ENCODE measurements at regions of chr17 and their contacts with region 1.

Region 1: DNA sequence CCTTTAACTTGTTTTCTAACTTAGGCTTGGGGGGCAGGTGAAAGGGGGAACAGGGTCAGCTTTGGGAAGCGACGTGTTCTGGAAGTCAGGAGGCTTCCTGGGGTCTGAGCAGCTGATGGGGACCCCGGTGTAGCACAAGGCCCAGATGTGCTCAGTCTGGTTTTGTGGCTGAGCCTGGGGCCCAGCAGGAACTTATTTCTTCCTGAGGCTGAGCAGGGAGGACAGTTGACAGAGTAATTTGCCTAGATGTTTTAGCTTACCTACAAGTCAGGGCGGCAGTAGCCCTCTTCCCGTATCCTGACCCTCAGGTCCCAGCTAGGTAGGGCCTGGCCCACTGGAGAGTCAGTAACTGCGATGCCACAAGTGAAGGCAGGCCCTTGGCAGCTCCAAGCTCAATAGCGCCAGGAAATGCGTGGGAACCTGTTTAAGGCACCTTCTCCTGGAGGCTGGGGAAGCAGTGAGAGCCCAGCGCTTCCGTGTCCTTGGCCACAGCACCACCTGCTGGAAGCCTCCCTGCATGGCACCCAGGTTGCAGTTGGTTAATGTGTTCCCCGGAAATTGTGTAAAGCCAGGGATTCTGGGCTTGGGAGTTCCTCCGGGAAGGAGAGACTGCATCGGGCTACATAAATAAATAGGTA is 5.2 kb downstream of the CCR7 start:
- DNase-seq: peak; percentile 90
- ATAC-seq: no peak
- H3K4me3 Mint-ChIP-seq: peak overlapping the region; percentile 94
- H3K27ac Mint-ChIP-seq: peak overlapping the region; percentile 98
- H3K4me1 Mint-ChIP-seq: peaks cover 60% of the 10 kb centered on the region
- H3K27me3 Mint-ChIP-seq: no peaks in the 10 kb centered on the region

Region 2: DNA sequence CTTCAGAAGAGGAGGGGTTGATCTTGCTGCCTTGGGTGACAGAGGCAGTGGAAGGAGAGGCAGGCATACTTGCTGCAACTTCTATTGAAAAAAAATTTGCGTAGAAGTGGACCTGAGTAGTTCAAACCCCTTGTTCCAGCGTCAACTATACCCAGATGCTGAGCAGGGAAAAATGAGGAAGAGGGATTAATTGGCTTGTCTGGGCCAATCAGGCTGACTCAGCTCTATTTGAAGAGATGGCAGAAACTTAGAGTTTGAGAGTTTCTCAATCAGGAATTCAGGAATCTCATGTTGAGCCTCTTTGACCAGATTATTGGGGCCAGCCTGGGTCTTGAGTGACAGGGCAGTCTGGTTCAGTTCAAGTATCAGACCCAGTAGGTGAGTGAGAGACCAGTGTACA is 402.1 kb before region 1 on chr17:
- CTCF ChIA-PET with region 1: no interaction called
- POLR2A ChIA-PET with region 1: interaction called, 6 read pairs
- intact Hi-C with region 1: loop called in 1 of 2 experiments (anchors 1 kb)
- DNase-seq: no peak
- ATAC-seq: no peak
- H3K4me3 Mint-ChIP-seq: no peak overlapping the region
- H3K27ac Mint-ChIP-seq: peak overlapping the region; percentile 24
- H3K4me1 Mint-ChIP-seq: peaks cover 35% of the 10 kb centered on the region
- H3K27me3 Mint-ChIP-seq: no peaks in the 10 kb centered on the region

Region 3: DNA sequence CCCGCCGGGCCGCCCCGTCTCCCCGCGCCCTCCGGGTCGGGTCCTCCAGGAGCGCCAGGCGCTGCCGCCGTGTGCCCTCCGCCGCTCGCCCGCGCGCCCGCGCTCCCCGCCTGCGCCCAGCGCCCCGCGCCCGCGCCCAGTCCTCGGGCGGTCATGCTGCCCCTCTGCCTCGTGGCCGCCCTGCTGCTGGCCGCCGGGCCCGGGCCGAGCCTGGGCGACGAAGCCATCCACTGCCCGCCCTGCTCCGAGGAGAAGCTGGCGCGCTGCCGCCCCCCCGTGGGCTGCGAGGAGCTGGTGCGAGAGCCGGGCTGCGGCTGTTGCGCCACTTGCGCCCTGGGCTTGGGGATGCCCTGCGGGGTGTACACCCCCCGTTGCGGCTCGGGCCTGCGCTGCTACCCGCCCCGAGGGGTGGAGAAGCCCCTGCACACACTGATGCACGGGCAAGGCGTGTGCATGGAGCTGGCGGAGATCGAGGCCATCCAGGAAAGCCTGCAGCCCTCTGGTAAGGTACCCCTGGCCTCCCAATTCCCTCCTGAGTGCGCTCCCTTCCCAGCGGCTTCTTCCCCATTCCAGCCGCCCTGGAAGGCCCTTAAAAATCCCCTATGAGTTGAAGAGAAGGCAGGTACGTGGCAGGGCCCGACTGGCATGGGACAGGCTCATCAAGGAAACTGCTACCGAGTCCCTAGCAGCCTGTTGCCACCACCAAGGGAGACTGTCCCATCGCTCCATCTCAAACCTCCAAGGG is 116.3 kb before region 1 on chr17:
- CTCF ChIA-PET with region 1: interaction called, 4 read pairs
- POLR2A ChIA-PET with region 1: interaction called, 3 read pairs
- intact Hi-C with region 1: loop called in 1 of 2 experiments (anchors 1 kb)
- DNase-seq: peak; percentile 83
- ATAC-seq: peak; percentile 68
- H3K4me3 Mint-ChIP-seq: peak overlapping the region; percentile 70
- H3K27ac Mint-ChIP-seq: peak overlapping the region; percentile 88
- H3K4me1 Mint-ChIP-seq: peaks cover 45% of the 10 kb centered on the region
- H3K27me3 Mint-ChIP-seq: peaks cover 5% of the 10 kb centered on the region

Region 4: GRCh38 chr17:40542558-40543411 is 17.3 kb before region 1 on chr17:
- CTCF ChIA-PET with region 1: interaction called, 403 read pairs
- POLR2A ChIA-PET with region 1: interaction called, 179 read pairs
- intact Hi-C with region 1: loop called (anchors 1 kb)
- DNase-seq: peak; percentile 76
- ATAC-seq: peak; percentile 52
- H3K4me3 Mint-ChIP-seq: peak overlapping the region; percentile 63
- H3K27ac Mint-ChIP-seq: peak overlapping the region; percentile 98
- H3K4me1 Mint-ChIP-seq: peaks cover 88% of the 10 kb centered on the region
- H3K27me3 Mint-ChIP-seq: no peaks in the 10 kb centered on the region

Region 5: DNA sequence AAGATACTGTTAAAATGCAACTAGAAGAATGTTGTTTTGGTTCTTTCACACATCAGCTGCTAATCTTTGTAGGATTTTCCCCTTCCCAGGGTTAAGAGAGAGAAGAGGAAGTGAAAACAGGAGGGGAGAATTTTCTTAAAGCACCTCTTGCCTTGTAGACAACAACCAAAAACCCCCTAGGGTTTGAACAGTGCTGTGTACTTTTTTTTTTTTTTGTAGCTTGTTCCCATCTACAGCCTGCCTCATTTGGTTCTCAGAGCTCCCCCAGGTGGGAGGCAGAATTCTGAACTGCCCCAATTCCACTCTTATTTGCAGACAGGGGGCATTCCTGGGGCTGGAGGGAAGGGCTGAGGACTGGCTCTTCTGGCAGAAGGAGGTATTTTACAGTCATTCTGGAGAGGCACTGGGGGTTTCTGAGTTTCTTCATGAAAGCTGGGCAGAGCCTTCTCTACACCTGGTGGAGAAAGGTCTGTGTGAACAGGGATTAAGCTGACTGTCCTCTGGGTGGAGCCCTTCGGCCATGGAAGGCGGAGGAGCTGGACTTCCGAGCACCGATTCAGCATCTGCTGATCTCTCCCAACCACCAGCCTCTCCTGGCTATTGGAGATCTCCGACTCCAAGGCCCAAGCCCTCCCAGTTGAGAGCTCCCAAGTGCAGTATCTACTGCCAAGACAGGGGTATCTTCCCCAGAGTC is 55.4 kb after region 1 on chr17:
- CTCF ChIA-PET with region 1: interaction called, 149 read pairs
- POLR2A ChIA-PET with region 1: interaction called, 170 read pairs
- intact Hi-C with region 1: loop called (anchors 1 kb)
- DNase-seq: peak; percentile 64
- ATAC-seq: peak; percentile 35
- H3K4me3 Mint-ChIP-seq: peak overlapping the region; percentile 54
- H3K27ac Mint-ChIP-seq: peak overlapping the region; percentile 91
- H3K4me1 Mint-ChIP-seq: peaks cover 77% of the 10 kb centered on the region
- H3K27me3 Mint-ChIP-seq: no peaks in the 10 kb centered on the region

Region 6: GRCh38 chr17:40726919-40727318 is 166.8 kb after region 1 on chr17:
- CTCF ChIA-PET with region 1: no interaction called
- POLR2A ChIA-PET with region 1: no interaction called
- intact Hi-C with region 1: loop called in 1 of 2 experiments (anchors 5 kb)
- DNase-seq: no peak
- ATAC-seq: no peak
- H3K4me3 Mint-ChIP-seq: no peak overlapping the region
- H3K27ac Mint-ChIP-seq: no peak overlapping the region
- H3K4me1 Mint-ChIP-seq: peaks cover 2% of the 10 kb centered on the region
- H3K27me3 Mint-ChIP-seq: peaks cover 19% of the 10 kb centered on the region

Region 7: DNA sequence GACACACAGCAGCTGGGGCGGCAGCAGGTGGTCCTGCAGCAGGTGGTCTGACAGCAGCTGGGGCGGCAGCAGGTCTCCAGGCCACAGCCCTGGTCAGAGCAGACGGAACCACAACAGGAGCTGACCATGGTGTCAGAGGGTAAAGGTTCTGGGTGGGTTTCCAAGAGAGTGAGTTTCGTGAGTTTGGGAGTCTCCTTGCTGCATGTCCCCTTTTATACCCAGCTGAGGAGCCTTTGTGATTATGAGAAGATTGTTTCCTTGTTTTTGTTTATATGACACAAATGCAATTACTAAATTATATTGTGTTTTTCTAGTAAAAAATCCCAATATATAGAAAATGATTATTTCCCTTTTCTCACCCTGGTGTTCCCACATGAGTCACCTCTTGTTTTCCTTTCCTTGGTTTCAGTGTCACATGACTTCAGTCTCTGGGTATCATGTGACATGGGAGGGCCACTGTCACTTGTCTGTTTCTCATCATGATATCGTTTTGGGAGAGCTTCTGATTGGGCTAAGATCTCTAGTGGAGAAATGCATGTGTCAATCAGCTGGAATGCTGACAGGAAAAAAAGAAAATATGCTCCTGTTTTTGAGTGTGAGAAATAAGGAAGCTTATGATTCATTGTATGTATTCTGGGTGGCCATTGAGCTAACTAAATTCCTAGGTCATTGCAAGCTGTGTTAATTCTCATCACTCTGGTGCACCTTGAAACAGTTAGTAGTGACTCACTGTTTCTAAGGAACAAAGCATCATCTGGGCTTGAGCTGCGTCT is 580.5 kb after region 1 on chr17 and contains the start of gene KRTAP4-6:
- CTCF ChIA-PET with region 1: no interaction called
- POLR2A ChIA-PET with region 1: no interaction called
- intact Hi-C with region 1: no loop called
- DNase-seq: no peak
- ATAC-seq: no peak
- H3K4me3 Mint-ChIP-seq: no peak within 1 kb of the TSS
- H3K27ac Mint-ChIP-seq: no peak within 1 kb of the TSS
- H3K4me1 Mint-ChIP-seq: no peaks in the 10 kb centered on the region
- H3K27me3 Mint-ChIP-seq: peaks cover 2% of the 10 kb centered on the region
- total RNA-seq, gene KRTAP4-6: not detected

Region 8: GRCh38 chr17:41688699-41689496 is 1128.8 kb after region 1 on chr17 and contains the start of gene EIF1:
- CTCF ChIA-PET with region 1: no interaction called
- POLR2A ChIA-PET with region 1: interaction called, 4 read pairs
- intact Hi-C with region 1: loop called in 1 of 2 experiments (anchors 2 kb)
- DNase-seq: peak; percentile 100
- ATAC-seq: peak; percentile 81
- H3K4me3 Mint-ChIP-seq: peak within 1 kb of the TSS; percentile 97
- H3K27ac Mint-ChIP-seq: peak within 1 kb of the TSS; percentile 95
- H3K4me1 Mint-ChIP-seq: peaks cover 20% of the 10 kb centered on the region
- H3K27me3 Mint-ChIP-seq: no peaks in the 10 kb centered on the region
- total RNA-seq, gene EIF1: 869 to 977 TPM